Caco-2 (cell line): ENCODE measurements at regions of chr5 and their contacts with region 1.

Region 1: GRCh38 chr5:158695595-158696330 is 404.0 kb downstream of the EBF1 start:
- DNase-seq: peak; percentile 71 to 78
- H3K4me3 ChIP-seq: no peak overlapping the region
- H3K4me3 Mint-ChIP-seq: no peak overlapping the region
- H3K27ac Mint-ChIP-seq: no peak overlapping the region
- H3K4me1 ChIP-seq: peaks cover 10% of the 10 kb centered on the region
- H3K4me1 Mint-ChIP-seq: peaks cover 14% of the 10 kb centered on the region
- H3K27me3 ChIP-seq: no peaks in the 10 kb centered on the region
- H3K27me3 Mint-ChIP-seq: peaks cover 13% of the 10 kb centered on the region
- CTCF ChIP-seq: peak; percentile 93 to 95

Region 2: GRCh38 chr5:158174918-158175851 is 520.6 kb before region 1 on chr5:
- CTCF ChIA-PET with region 1: interaction called, 3 read pairs
- POLR2A ChIA-PET with region 1: no interaction called
- intact Hi-C with region 1: loop called (anchors 1 kb)
- DNase-seq: peak; percentile 67 to 69
- H3K4me3 ChIP-seq: no peak overlapping the region
- H3K4me3 Mint-ChIP-seq: no peak overlapping the region
- H3K27ac Mint-ChIP-seq: no peak overlapping the region
- H3K4me1 ChIP-seq: peaks cover 11% of the 10 kb centered on the region; the same call in 1 of the 2 replicates
- H3K4me1 Mint-ChIP-seq: no peaks in the 10 kb centered on the region
- H3K27me3 ChIP-seq: no peaks in the 10 kb centered on the region
- H3K27me3 Mint-ChIP-seq: peaks cover 7% of the 10 kb centered on the region
- CTCF ChIP-seq: peak; percentile 74 to 87

Region 3: DNA sequence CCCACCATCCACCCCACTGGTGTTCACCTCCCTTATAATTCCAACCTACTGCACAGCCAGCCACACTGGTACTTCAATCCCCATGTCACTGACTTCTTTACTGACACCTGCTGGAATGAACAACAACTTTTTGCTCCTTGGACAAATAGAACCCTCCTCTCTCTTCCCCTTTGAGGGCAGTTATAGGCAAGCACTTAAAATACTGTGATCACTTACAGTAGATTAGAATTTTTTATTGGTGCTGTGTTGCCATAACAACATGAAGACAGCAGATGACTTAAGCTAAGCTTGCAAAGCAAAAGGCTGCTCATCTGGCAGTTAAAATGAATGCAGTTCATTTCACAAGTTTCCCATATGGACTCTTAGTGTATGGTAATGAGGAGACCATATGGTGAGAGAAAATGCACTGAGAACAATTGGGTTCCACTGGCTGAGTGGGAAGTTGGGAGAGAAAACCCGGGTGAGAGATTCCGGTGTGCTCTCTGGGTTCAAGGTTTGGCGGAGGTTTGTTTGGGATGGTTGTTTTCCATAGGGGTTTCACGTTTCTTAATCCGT is 29.6 kb after region 1 on chr5:
- CTCF ChIA-PET with region 1: no interaction called
- POLR2A ChIA-PET with region 1: no interaction called
- intact Hi-C with region 1: loop called (anchors 1 kb)
- DNase-seq: no peak
- H3K4me3 ChIP-seq: no peak overlapping the region
- H3K4me3 Mint-ChIP-seq: no peak overlapping the region
- H3K27ac Mint-ChIP-seq: no peak overlapping the region
- H3K4me1 ChIP-seq: no peaks in the 10 kb centered on the region
- H3K4me1 Mint-ChIP-seq: no peaks in the 10 kb centered on the region
- H3K27me3 ChIP-seq: no peaks in the 10 kb centered on the region; the same call in 1 of the 2 replicates
- H3K27me3 Mint-ChIP-seq: peaks cover 15% of the 10 kb centered on the region
- CTCF ChIP-seq: no peak

Region 4: GRCh38 chr5:158758675-158759074 is 62.9 kb after region 1 on chr5:
- CTCF ChIA-PET with region 1: no interaction called
- POLR2A ChIA-PET with region 1: no interaction called
- intact Hi-C with region 1: loop called (anchors 5 kb)
- DNase-seq: no peak
- H3K4me3 ChIP-seq: no peak overlapping the region
- H3K4me3 Mint-ChIP-seq: no peak overlapping the region
- H3K27ac Mint-ChIP-seq: no peak overlapping the region
- H3K4me1 ChIP-seq: no peaks in the 10 kb centered on the region
- H3K4me1 Mint-ChIP-seq: no peaks in the 10 kb centered on the region
- H3K27me3 ChIP-seq: no peaks in the 10 kb centered on the region
- H3K27me3 Mint-ChIP-seq: peaks cover 13% of the 10 kb centered on the region
- CTCF ChIP-seq: no peak

Region 5: DNA sequence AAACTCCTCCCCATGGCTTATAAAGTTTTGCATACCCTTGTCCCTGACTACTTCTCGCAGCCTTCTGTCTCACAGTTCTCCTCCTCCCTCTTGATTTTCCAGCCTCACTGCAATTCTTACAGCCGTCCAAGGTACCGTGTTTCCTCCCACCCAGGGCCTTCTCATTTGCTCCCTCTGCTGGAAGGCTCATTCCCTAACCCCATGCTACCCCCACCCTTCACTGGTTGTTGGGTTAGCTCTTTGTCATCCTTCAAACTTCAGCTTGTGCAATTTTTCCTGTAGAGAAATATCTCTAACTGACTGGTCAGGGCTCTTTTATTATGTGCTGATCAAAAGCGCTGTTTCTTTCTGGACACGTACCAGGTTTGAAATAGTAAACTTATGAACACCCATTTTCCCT is 74.7 kb after region 1 on chr5:
- CTCF ChIA-PET with region 1: no interaction called
- POLR2A ChIA-PET with region 1: no interaction called
- intact Hi-C with region 1: loop called (anchors 1 kb)
- DNase-seq: peak; percentile 33 to 37
- H3K4me3 ChIP-seq: no peak overlapping the region
- H3K4me3 Mint-ChIP-seq: no peak overlapping the region
- H3K27ac Mint-ChIP-seq: no peak overlapping the region
- H3K4me1 ChIP-seq: no peaks in the 10 kb centered on the region
- H3K4me1 Mint-ChIP-seq: no peaks in the 10 kb centered on the region
- H3K27me3 ChIP-seq: no peaks in the 10 kb centered on the region
- H3K27me3 Mint-ChIP-seq: peaks cover 25% of the 10 kb centered on the region
- CTCF ChIP-seq: peak; percentile 37 to 59

Region 6: GRCh38 chr5:159106569-159107282 is 411.0 kb after region 1 on chr5:
- CTCF ChIA-PET with region 1: interaction called, 17 read pairs
- POLR2A ChIA-PET with region 1: no interaction called
- intact Hi-C with region 1: loop called (anchors 1 kb)
- DNase-seq: peak; percentile 59 to 76
- H3K4me3 ChIP-seq: no peak overlapping the region
- H3K4me3 Mint-ChIP-seq: peak overlapping the region; percentile 20
- H3K27ac Mint-ChIP-seq: no peak overlapping the region
- H3K4me1 ChIP-seq: no peaks in the 10 kb centered on the region
- H3K4me1 Mint-ChIP-seq: peaks cover 7% of the 10 kb centered on the region
- H3K27me3 ChIP-seq: no peaks in the 10 kb centered on the region; the same call in 1 of the 2 replicates
- H3K27me3 Mint-ChIP-seq: peaks cover 41% of the 10 kb centered on the region
- CTCF ChIP-seq: peak; percentile 83 to 86

Region 7: DNA sequence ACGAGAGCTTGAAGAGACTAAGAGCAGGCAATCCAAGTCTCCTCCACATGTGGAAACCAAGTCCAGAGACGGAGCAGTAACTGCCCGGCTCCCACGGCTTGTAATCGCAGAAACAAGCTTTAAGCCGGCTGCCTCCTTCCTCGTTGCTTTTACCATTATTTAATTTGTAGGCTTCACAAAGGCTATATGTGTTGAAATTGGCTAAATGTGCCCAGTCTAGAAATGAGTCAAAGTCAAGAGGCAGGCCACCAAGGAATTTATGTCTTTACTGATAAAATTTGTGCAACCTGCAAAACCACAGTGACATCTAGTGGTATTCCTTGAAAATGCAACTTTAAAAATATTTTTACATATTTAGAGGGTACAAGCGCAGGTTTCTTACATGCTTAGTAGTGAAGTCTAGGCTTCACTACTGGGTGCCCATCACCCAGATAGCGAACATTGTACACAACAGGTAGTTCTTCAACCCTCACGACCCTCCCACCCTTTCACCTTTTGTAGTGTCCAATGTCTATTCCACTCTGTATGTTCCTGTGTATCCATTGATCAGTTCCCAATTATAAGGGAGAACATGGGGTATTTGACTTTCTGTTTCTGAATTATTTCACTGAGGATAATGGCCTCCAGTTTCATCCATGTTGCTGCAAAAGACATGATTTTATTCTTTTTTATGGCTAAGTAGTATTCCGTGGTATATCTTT is 437.4 kb after region 1 on chr5:
- CTCF ChIA-PET with region 1: interaction called, 6 read pairs
- POLR2A ChIA-PET with region 1: no interaction called
- intact Hi-C with region 1: loop called (anchors 1 kb)
- DNase-seq: peak in 1 of 2 experiments; percentile 42
- H3K4me3 ChIP-seq: no peak overlapping the region
- H3K4me3 Mint-ChIP-seq: no peak overlapping the region
- H3K27ac Mint-ChIP-seq: no peak overlapping the region
- H3K4me1 ChIP-seq: no peaks in the 10 kb centered on the region
- H3K4me1 Mint-ChIP-seq: no peaks in the 10 kb centered on the region
- H3K27me3 ChIP-seq: no peaks in the 10 kb centered on the region
- H3K27me3 Mint-ChIP-seq: peaks cover 12% of the 10 kb centered on the region
- CTCF ChIP-seq: peak; percentile 74 to 77